AG04449 (cell line): ENCODE measurements at regions of chr15 and their contacts with region 1.

Region 1: GRCh38 chr15:88904624-88905327 is 8.4 kb downstream of the MFGE8 start:
- DNase-seq: no peak
- H3K4me3 ChIP-seq: no peak overlapping the region
- CTCF ChIP-seq: peak; percentile 91

Region 2: DNA sequence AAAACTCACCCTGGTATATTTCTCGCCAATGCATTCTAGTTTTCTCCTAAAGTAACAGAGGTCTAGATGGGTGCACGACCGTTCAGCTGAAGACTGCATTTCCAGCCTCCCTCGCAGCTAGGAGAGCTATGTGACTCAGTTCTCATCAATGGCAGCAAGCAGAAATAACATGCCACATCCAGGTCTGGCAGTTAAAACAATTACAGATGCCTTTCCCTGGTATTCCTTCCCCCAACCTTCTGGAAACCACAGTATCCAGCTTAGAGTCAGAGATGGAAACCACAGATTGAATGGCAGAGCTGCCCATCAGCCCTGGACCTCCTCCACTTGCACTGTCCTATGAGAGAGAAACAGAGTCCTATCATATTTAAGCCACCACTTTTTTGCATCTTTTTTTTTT is 14.3 kb before region 1 on chr15:
- CTCF ChIA-PET with region 1: interaction called, 30 read pairs
- POLR2A ChIA-PET with region 1: no interaction called
- DNase-seq: no peak
- H3K4me3 ChIP-seq: no peak overlapping the region
- CTCF ChIP-seq: no peak

Region 3: DNA sequence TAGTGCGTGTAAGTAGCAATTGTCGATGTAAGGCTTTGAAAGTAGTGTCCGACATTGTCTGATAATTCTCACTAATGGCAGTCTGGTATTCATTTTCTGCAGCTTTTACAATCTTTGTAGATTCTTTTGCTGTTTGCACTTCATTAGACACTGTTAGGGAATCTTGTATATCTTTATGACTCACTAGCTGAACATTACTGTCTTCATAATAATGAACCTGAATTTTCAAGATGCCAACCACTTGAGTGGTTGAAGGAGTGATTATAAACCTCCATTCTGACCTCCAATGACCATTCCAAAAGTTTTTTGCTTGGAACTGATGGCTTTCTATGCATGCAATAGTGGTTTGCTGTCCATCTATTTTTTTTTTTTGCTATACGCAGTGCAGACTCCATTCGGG is 84.8 kb after region 1 on chr15:
- CTCF ChIA-PET with region 1: interaction called, 14 read pairs
- POLR2A ChIA-PET with region 1: interaction called, 16 read pairs
- DNase-seq: peak; percentile 96
- H3K4me3 ChIP-seq: no peak overlapping the region
- CTCF ChIP-seq: no peak

Region 4: GRCh38 chr15:89017370-89018066 is 112.7 kb after region 1 on chr15:
- CTCF ChIA-PET with region 1: interaction called, 148 read pairs
- POLR2A ChIA-PET with region 1: interaction called, 6 read pairs
- DNase-seq: peak; percentile 69
- H3K4me3 ChIP-seq: peak overlapping the region; percentile 45
- CTCF ChIP-seq: peak; percentile 82

Region 5: DNA sequence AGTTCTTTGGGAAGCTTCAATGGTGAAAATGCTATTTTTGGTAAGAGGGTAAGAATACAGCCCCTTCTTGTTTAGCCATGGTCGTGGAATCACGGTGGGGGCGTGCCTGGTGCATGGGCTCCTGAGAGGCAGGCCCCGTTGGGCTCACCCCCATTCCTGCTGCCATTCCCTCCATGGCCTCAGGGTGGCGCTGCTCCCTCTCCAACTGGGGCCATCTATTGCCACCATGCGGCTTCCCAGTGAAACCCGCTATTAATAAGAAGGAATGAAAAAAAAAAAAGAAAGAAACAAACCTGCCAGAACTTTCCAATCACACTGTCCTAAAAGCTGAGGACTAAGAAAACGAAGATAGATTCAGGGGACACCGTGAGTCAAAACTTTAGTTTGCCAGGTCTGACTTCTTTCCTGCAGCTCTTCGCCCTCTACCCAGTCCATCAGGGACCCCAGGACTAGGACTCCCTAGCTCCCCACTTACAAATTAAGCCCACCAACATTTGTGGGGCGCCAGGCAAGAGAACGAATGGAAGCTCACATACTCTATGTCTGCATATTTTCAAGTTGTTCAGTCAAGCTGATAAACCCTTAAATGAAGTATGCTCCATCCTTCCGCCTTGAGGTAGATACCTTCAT is 152.8 kb after region 1 on chr15:
- CTCF ChIA-PET with region 1: interaction called, 37 read pairs
- POLR2A ChIA-PET with region 1: no interaction called
- DNase-seq: no peak
- H3K4me3 ChIP-seq: no peak overlapping the region
- CTCF ChIP-seq: peak; percentile 98

Region 6: GRCh38 chr15:89177633-89178306 is 273.0 kb after region 1 on chr15:
- CTCF ChIA-PET with region 1: interaction called, 28 read pairs
- POLR2A ChIA-PET with region 1: no interaction called
- DNase-seq: peak; percentile 37
- H3K4me3 ChIP-seq: no peak overlapping the region
- CTCF ChIP-seq: peak; percentile 80

Region 7: DNA sequence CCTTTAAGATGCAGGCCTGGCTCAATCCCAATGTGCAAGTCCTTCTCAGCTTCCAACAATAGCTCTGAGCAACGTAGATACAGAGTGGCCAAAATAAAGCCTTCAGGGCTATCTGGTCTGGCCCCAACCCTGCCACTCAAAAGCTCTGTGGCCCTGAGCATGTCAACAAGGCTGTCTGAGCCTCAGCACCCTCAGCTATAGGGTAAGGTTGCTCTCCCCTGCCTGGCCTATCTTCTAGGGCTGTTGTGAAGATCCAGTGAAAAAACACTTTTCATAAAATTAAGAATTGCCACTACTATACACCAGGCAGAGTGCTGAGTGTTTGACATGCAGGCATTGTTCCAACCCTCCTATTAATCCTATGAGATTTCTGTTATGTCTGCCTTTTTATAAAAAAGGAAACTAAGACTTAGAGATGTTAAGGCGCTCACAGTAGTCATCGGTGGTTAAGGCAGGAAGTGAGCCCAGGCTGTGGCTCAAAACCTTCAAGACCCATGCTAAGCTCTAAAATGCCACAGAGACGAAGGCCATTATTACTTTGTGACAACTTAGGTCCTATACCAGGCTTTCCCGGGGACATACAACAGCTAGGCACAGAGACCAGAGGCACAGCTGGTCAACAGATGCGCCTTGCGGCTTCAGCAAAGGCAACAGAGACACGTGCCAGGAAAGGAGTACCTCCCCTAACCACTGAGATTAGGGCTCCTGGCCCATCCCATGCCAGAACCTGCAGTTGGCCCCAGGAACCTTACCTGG is 424.7 kb after region 1 on chr15:
- CTCF ChIA-PET with region 1: no interaction called
- POLR2A ChIA-PET with region 1: no interaction called
- DNase-seq: no peak
- H3K4me3 ChIP-seq: no peak overlapping the region
- CTCF ChIP-seq: no peak